ENCODE measurements at regions of chr4 and their contacts with region 1.

Region 1: GRCh38 chr4:87390891-87391575 is at the start of gene HSD17B11:
- DNase-seq: peak; percentile 77
- ATAC-seq: peak; percentile 99
- H3K4me3 Mint-ChIP-seq: peak within 1 kb of the TSS; percentile 92
- H3K27ac Mint-ChIP-seq: peak within 1 kb of the TSS; percentile 80
- H3K4me1 Mint-ChIP-seq: peaks cover 25% of the 10 kb centered on the region
- H3K27me3 Mint-ChIP-seq: peaks cover 6% of the 10 kb centered on the region
- total RNA-seq, gene HSD17B11: 42.8 to 48.0 TPM

Region 2: DNA sequence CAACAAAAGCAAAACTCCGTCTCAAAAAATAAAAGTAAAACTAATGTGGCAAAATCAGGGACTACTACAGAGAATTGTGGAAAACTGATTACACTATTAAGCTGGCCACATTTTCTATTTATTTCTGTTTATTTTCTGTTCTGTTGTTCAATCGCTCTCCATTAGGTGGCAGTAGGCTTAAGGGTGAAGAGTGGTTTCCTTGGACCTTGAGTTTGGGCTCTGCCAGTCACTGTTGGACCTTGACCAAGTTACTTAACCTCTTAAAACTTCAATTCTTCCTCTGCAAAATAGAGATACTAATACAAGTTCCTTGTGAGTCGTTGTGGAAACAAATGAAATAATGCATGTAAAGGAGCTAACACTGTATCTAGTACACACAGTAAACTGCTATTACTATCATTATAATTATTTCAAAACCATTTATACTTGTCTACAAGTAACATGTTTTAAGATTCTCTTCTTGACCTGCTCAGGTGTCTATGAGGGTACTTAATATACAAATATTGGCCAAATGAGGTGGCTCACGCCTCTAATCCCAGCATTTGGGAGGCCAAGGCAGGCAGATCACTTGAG is 15.2 kb before region 1 on chr4:
- POLR2A ChIA-PET with region 1: interaction called, 10 read pairs
- DNase-seq: no peak
- ATAC-seq: no peak
- H3K4me3 Mint-ChIP-seq: no peak overlapping the region
- H3K27ac Mint-ChIP-seq: no peak overlapping the region
- H3K4me1 Mint-ChIP-seq: peaks cover 2% of the 10 kb centered on the region
- H3K27me3 Mint-ChIP-seq: no peaks in the 10 kb centered on the region

Region 3: DNA sequence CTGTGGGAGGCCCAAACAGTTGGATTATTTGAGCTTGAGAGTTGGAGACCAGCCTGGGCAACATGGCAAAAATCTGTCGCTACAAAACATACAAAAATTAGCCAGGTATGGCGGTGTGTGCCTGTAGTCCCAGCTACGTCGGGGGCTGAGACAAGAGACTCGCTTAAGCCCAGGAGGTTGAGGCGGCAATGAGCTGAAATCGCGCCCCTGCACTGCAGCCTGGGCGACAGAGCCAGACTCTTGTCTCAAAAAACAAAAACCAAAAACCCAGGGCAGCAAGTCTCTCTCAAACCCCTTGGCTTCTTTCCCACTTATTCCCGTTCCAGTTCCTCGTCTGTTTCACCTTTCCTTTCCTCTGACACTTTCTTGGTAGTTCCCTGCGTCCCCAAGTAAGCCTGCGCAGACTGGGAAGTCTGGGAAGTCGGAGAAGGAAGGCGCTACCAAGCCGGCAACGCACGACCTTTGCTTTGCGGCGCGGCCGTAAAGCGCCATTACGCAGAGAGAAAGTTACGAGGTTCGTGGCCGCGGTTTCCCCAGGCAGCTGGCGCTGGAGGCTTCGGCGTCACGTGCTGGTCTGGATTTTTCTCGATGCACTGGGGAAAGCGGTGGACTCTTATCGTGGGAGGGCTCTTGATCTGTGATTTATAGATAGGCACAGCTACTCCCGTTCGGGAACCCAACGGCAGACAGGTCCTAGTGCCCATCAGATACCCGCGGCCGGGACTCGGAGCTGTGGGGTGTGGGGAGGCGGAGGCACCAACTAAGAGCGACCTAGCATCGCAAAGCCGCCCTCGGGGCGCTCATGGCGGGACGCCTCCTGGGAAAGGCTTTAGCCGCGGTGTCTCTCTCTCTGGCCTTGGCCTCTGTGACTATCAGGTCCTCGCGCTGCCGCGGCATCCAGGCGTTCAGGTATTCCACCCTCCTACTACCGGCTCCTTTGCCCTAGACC is 31.3 kb after region 1 on chr4 and contains the start of gene NUDT9:
- POLR2A ChIA-PET with region 1: interaction called, 20 read pairs
- DNase-seq: peak; percentile 87
- ATAC-seq: peak; percentile 94
- H3K4me3 Mint-ChIP-seq: peak within 1 kb of the TSS; percentile 99
- H3K27ac Mint-ChIP-seq: peak within 1 kb of the TSS; percentile 97
- H3K4me1 Mint-ChIP-seq: peaks cover 14% of the 10 kb centered on the region
- H3K27me3 Mint-ChIP-seq: no peaks in the 10 kb centered on the region
- total RNA-seq, gene NUDT9: 10.5 to 13.4 TPM

Region 4: DNA sequence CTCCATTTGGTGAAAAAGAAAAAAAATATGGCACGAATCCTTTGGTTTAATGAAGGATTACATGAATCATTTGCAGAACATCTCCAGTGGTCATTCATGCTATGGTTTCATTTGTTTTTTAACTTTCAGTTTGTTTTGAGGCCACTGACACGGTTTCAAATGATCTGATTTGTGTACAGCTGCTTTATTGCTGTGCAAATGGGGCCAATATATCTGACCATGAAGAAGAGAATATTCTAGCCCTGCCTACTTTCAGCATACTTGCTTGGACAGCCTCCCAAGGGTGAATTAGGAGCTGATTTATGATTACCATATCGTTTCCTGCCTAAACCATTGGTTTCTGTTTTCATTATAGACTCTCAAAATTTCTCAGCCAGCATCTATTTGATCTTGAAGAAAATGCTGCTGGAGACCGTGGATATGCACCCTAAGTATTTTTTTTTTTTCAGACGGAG is 107.4 kb after region 1 on chr4:
- POLR2A ChIA-PET with region 1: no interaction called
- DNase-seq: no peak
- ATAC-seq: no peak
- H3K4me3 Mint-ChIP-seq: peak overlapping the region; percentile 20
- H3K27ac Mint-ChIP-seq: no peak overlapping the region
- H3K4me1 Mint-ChIP-seq: peaks cover 4% of the 10 kb centered on the region
- H3K27me3 Mint-ChIP-seq: peaks cover 4% of the 10 kb centered on the region

Region 5: DNA sequence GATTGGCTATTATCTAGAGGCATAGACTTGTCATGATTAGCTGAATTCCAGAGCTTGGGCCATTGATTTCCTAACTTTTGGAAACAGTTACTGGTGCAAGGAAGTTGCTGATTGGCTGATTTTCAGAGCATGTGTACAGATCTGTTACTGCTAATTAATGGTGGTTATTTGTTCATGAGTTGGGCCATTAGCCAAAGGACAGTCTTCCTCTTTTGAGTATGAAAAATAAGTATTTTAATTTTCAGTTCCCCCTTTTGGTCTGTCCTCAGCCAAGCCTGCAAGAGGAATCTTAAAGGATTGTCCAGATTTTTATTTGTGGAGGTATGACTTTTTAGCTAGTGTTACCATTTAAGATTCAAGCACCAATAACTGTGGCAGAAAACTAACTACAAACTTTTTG is 210.3 kb after region 1 on chr4:
- POLR2A ChIA-PET with region 1: no interaction called
- DNase-seq: no peak
- ATAC-seq: no peak
- H3K4me3 Mint-ChIP-seq: no peak overlapping the region
- H3K27ac Mint-ChIP-seq: no peak overlapping the region
- H3K4me1 Mint-ChIP-seq: no peaks in the 10 kb centered on the region
- H3K27me3 Mint-ChIP-seq: peaks cover 26% of the 10 kb centered on the region

Measured in activated naive CD8-positive, alpha-beta T cell treated with anti-CD3 and anti-CD28 coated beads, Interleukin-2, amount 10 ng/mL, durations not matched to agents 7 days and 5 days (primary cell).